AG04449 (cell line): ENCODE measurements at regions of chr1 and their contacts with region 1.

Region 1: DNA sequence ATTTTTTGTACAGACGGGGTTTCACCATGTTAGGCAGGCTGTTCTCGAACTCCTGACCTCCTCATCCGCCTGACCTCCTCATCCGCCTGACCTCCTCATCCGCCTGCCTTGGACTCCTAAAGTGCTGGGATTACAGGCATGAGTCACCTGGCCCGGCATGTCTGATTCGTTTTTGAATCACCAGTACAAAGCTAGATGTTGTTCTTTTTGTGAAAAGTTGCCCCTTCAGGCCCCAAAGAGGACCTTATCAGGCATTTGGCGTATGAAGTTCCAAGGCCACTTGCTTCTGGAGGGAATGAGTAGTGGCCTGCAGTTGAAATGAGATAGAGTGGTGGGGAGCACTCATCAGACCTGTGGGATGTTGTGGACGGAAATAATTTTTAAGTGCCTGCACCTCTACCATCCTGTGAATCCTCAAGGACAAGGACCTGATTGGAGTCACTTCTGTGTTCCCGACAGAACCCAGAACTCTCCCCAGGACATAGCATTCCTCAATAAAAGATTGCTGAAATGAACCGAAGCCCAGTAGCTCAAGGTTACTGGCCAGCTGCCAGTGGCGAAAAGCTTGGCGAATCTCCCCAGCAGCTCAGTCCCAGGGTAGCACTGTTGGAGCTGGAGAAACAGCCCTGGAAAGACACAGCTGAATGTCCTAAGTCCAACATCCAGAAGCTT is 50.1 kb downstream of the NDUFS5 start:
- DNase-seq: no peak
- H3K4me3 ChIP-seq: no peak overlapping the region
- CTCF ChIP-seq: no peak

Region 2: GRCh38 chr1:39086865-39087409 is 10.7 kb after region 1 on chr1:
- CTCF ChIA-PET with region 1: interaction called, 41 read pairs
- POLR2A ChIA-PET with region 1: no interaction called
- DNase-seq: no peak
- H3K4me3 ChIP-seq: no peak overlapping the region
- CTCF ChIP-seq: no peak

Region 3: DNA sequence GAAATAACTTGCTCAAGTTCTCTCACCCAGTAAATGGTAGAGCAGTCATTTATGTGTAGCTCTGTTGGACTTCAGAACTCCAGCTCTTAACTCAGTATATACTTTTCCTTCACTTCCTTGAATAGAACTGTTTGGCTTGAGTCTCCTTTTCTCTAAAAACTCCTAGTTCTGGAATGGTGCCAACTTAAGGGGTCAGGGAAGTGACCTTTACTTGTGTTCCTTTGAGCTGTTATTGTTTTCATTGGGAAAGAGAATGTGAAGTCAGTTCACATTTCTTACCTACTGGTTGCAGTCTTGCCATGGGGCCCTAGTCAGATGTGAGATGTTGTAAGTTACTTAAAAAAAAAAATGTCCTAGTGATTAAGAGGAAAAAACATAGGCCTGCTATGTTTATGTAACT is 51.2 kb after region 1 on chr1:
- CTCF ChIA-PET with region 1: no interaction called
- POLR2A ChIA-PET with region 1: no interaction called
- DNase-seq: no peak
- H3K4me3 ChIP-seq: no peak overlapping the region
- CTCF ChIP-seq: no peak

Region 4: DNA sequence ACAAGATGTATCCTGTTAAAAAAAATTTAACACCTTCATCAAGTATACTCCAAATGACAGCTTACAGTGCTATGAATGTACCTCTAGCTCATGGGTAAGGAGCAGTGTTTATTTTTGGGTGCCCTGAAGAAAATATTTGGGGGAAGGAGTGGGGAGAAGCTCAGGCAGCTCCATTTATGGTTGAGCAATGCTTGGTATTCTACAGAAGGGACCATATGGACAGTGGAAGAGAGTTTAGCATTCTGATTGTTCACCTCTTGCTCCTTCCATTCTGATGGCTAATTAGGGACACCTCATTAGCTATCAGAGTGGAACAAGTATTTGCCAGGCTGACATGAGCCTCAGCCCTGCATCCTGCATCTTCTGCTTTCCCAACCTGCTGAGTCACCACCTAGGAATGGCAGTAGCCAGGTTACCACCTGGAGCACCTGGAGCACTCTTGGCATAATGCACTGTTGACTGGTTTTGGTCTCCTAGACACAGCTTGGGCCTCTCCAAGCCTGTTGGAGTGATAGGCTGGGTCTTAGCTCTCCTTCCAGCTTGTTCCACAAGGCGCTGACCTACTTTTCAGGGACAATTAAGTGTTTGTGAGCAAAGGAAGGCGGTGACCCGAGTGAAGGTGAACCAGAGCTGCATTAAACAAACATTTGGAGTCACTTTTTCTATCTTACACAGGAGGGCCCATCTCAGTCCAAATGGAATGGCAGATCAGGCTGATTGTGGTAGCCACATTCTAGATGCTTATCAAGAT is 66.3 kb after region 1 on chr1:
- CTCF ChIA-PET with region 1: no interaction called
- POLR2A ChIA-PET with region 1: no interaction called
- DNase-seq: no peak
- H3K4me3 ChIP-seq: no peak overlapping the region
- CTCF ChIP-seq: no peak